Mammary epithelial cell (primary cell): ENCODE measurements at regions of chr3 and their contacts with region 1.

Region 1: DNA sequence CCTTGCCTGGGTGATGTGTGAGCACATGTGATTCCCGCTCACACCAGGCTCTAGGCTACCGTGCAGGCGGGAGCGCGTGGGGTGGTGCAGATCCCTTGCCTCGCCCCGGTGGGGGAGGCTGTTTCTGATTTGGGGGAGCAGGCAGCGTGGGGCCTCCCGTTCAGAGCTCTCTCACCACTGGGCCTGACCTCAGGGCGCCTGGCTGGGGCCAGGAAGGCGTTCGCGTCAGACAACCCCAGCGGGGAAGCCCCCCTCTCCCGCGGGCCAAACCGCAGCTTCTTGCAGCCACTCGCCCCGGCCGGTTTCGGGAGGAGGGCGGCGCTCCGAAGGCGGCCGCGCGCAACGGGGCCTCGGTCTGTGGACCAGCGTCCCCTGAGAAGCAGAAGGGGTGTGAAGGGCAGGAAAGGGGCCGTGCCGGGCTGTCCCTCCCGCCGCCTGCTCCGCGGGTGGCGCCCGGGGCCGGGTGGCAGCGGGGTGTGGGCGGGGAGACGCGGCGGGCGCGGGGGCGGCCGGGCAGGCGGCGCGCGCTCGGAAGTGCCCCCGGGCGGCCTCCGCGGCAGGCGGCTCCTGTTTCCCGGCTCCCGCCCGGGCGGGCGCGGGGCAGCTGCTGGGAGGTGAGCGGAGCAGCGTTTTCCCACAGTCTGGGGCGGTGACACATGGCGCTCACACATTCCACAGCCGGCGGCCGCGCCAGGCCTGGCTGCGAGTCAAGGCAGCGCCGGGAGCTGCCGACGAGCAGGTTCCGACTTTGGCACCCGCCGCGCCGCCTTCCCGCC is 65.1 kb upstream of the HES1 start:
- DNase-seq: peak; percentile 95
- H3K4me3 ChIP-seq: peak overlapping the region; percentile 18 to 40 (median 24)
- H3K27ac ChIP-seq: peak overlapping the region; percentile 61
- H3K4me1 ChIP-seq: peaks cover 20% of the 10 kb centered on the region
- H3K27me3 ChIP-seq: no peaks in the 10 kb centered on the region
- CTCF ChIP-seq: no peak

Region 2: DNA sequence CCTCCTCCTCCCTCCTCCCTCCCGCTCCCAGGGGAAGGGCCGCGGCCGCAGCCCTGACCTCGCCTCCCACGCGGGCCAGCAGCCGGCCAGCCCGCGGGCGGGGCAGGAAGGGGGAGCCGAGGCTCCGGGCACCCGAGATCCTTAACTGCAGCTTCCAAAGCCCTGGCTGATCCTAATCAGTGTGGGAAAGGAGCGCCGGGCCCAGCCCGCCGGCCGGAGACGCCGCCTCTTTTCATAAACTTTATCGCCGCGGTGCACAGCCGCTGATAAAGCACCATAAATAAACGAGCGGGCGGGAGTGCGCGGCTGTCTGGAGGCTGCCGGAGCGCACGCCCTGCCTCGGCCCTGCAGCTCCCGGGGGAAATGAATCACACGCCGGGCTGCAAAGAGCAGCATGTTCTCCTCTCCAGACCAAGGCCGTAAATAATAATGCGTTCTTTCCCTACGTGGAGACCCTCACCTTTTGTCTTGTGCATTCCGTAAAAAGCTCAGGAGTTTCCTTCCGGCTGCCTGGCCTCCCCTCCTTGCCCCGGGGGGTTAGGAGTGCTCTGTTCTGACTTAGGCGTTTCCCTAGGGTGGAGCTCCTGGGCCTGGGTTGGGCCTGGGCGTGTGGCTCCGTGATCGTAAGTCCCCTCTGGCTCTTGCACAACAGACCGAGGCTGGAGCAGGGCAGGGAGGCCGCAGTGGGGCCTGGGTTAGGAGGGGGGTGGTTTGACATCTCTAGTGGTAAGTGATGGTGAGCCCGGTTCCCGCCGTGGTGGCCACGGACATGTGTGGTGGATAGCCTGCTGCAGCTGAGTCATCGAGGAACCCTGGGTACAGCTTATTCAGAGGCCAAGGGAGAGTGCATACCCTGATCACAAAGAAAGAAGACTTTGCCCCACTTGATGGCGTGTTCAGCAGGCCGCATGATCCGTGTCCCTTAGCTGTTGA is 67.4 kb before region 1 on chr3:
- CTCF ChIA-PET with region 1: no interaction called
- dilution Hi-C with region 1: no loop called
- in situ Hi-C with region 1: no loop called
- intact Hi-C with region 1: loop called (anchors 5 kb)
- DNase-seq: peak; percentile 94
- H3K4me3 ChIP-seq: peak overlapping the region; percentile 29 to 41 (median 32)
- H3K27ac ChIP-seq: peak overlapping the region; percentile 75
- H3K4me1 ChIP-seq: peaks cover 25% of the 10 kb centered on the region
- H3K27me3 ChIP-seq: no peaks in the 10 kb centered on the region
- CTCF ChIP-seq: no peak

Region 3: DNA sequence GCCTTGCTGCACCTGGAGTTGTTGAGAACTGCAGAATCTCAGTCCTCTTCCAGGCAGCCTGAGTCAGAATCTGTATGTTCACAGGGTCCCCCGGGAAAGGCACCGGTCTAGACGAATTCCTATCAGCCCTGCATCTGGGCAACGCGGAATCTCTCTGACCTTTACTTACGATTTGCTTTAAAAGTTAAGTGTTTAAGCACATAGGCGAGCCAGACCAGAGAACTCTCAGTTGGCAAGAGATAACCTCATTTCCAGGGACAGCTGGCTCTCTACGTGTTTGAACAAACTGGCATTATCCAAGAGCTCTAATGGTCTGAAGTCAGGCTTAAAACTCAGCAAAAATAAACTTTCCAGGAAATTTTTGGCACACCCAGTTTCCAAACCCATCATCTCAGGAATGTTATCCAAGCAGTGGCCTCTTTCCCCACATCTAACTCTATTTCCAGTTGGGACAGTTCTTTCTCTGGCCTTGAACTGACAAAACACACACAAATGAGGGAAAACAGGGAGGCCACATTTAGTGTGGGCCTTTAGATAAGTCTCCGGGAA is 118.5 kb after region 1 on chr3:
- CTCF ChIA-PET with region 1: no interaction called
- dilution Hi-C with region 1: no loop called
- in situ Hi-C with region 1: no loop called
- intact Hi-C with region 1: no loop called
- DNase-seq: no peak
- H3K4me3 ChIP-seq: no peak overlapping the region
- H3K27ac ChIP-seq: no peak overlapping the region
- H3K4me1 ChIP-seq: no peaks in the 10 kb centered on the region
- H3K27me3 ChIP-seq: no peaks in the 10 kb centered on the region
- CTCF ChIP-seq: no peak